CD8-positive, alpha-beta memory T cell (primary cell): ENCODE measurements at regions of chr22 and their contacts with region 1.

Region 1: GRCh38 chr22:40436505-40437451 is 66.4 kb downstream of the SGSM3 start:
- DNase-seq: peak in 2 of 5 donors; percentile 50 to 66
- H3K4me3 ChIP-seq: no peak overlapping the region
- H3K4me3 Mint-ChIP-seq: peak overlapping the region in 4 of 7 donors; percentile 20 to 83 (median 36)
- H3K27ac ChIP-seq: peak overlapping the region; percentile 18
- H3K27ac Mint-ChIP-seq: peak overlapping the region; percentile 37 to 92 (median 79)
- H3K4me1 ChIP-seq: peaks cover 35% of the 10 kb centered on the region
- H3K4me1 Mint-ChIP-seq: peaks cover 39 to 64% (median 45%) of the 10 kb centered on the region in 3 donors
- H3K27me3 ChIP-seq: no peaks in the 10 kb centered on the region
- H3K27me3 Mint-ChIP-seq: no peaks in the 10 kb centered on the region

Region 2: DNA sequence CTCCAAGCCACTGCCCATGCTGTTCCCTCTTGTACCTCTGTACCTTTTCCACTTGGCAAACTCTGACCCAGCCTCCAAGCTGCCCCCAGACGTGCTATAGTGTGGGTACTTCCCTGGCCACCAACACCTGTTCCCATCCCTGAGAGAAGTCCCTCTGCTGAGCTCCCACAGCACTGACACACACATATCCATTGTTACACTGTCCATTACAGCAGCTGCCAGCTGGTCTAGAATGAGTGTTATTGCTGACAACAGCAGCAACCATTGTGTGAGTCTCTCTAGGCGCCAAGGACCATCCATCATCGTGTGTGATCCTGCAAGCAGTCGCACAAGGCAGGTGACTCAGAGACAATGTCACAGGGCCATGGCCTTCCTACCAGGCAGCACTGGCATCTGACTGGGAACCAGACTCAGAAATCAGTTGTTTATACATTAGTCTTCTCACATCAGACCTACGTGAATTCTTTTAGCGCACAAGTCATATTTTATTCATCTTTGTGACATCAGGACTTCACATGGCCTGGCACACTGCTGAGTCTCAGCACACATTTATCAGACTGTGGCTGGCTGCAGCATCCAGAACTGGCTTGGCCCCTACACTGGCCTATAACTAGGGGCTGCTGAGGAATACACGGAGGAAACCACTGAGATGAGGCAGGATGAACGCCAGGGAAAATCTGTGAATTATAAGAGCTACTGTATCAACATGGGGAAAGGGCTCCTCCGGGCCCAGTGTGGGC is 10.0 kb before region 1 on chr22:
- CTCF ChIA-PET with region 1: interaction called, 11 read pairs
- POLR2A ChIA-PET with region 1: interaction called, 7 read pairs
- DNase-seq: no peak
- H3K4me3 ChIP-seq: no peak overlapping the region
- H3K4me3 Mint-ChIP-seq: no peak overlapping the region
- H3K27ac ChIP-seq: peak overlapping the region; percentile 9
- H3K27ac Mint-ChIP-seq: peak overlapping the region in 6 of 8 donors; percentile 10 to 85 (median 42)
- H3K4me1 ChIP-seq: no peaks in the 10 kb centered on the region
- H3K4me1 Mint-ChIP-seq: peaks cover 9 to 23% (median 20%) of the 10 kb centered on the region in 3 donors
- H3K27me3 ChIP-seq: no peaks in the 10 kb centered on the region
- H3K27me3 Mint-ChIP-seq: peaks cover 0 to 4% of the 10 kb centered on the region in 2 donors

Region 3: GRCh38 chr22:40449676-40450035 is 12.9 kb after region 1 on chr22:
- CTCF ChIA-PET with region 1: interaction called, 17 read pairs
- POLR2A ChIA-PET with region 1: no interaction called
- DNase-seq: no peak
- H3K4me3 ChIP-seq: no peak overlapping the region
- H3K4me3 Mint-ChIP-seq: peak overlapping the region in 2 of 7 donors; percentile 10 to 41
- H3K27ac ChIP-seq: no peak overlapping the region
- H3K27ac Mint-ChIP-seq: peak overlapping the region in 6 of 8 donors; percentile 24 to 77 (median 62)
- H3K4me1 ChIP-seq: peaks cover 56% of the 10 kb centered on the region
- H3K4me1 Mint-ChIP-seq: peaks cover 65 to 90% (median 87%) of the 10 kb centered on the region in 3 donors
- H3K27me3 ChIP-seq: no peaks in the 10 kb centered on the region
- H3K27me3 Mint-ChIP-seq: no peaks in the 10 kb centered on the region

Region 4: DNA sequence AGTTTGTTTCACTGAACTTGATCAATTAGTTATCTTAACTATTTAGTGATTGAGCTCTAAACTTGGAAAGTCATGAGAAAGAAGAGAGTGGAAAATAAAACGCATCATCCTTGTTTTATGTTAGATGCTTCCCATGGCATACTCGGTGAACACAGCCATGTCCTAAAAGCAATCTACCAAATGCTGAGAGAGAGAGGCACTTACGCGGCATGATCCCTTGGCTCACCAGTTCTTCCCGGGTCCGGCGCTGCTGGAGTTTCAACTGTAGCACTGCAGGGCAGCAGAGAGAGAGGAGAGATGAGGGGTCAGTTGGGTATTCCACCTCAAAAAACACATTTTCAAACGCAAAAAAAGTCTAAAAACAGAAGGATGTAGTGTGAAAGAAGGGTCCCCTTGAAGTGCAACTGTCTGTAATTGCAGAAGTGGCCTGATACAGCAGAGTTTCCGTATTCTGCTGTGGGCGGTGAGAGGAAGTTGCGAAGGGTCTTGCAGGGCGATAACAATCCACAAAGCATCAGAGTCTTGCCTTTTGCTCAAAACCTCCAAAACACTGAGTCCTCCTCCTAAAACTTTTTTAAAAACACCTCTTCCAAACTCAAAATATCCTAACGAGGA is 26.3 kb after region 1 on chr22:
- CTCF ChIA-PET with region 1: interaction called, 12 read pairs
- POLR2A ChIA-PET with region 1: no interaction called
- DNase-seq: peak; percentile 2 to 66 (median 29)
- H3K4me3 ChIP-seq: peak overlapping the region; percentile 83
- H3K4me3 Mint-ChIP-seq: peak overlapping the region; percentile 88 to 99 (median 97)
- H3K27ac ChIP-seq: peak overlapping the region; percentile 70
- H3K27ac Mint-ChIP-seq: peak overlapping the region; percentile 78 to 99 (median 94)
- H3K4me1 ChIP-seq: peaks cover 53% of the 10 kb centered on the region
- H3K4me1 Mint-ChIP-seq: peaks cover 58 to 64% (median 61%) of the 10 kb centered on the region in 3 donors
- H3K27me3 ChIP-seq: no peaks in the 10 kb centered on the region
- H3K27me3 Mint-ChIP-seq: no peaks in the 10 kb centered on the region

Region 5: DNA sequence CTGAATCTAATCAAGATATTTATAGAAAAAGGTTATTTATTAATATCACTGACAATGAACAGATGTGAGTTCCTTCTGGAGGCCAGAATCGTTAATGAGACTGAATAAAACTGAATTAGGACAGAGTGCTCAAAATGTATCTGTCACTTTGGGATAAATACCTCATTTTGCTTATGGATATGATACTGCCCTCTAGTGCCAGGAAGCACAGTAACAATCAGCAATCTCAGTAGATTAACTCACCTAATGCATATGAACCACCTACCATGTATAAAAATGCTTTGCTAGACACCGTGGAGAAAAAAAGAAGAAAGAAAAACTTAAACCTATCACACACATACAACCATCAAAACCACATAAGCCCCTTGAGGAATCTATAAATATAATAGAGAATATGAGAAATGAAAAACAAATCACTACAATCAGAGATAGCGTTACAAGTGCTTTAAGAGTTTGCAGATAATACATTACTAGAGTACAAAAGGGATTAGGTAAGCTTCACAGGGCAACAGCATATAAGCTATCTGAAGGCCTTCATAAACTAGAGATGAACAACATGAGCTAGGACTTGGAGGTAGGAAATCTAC is 51.0 kb after region 1 on chr22:
- CTCF ChIA-PET with region 1: interaction called, 42 read pairs
- POLR2A ChIA-PET with region 1: interaction called, 3 read pairs
- DNase-seq: peak in 2 of 5 donors; percentile 13 to 43
- H3K4me3 ChIP-seq: no peak overlapping the region
- H3K4me3 Mint-ChIP-seq: no peak overlapping the region
- H3K27ac ChIP-seq: no peak overlapping the region
- H3K27ac Mint-ChIP-seq: peak overlapping the region in 2 of 8 donors; percentile 1 to 90
- H3K4me1 ChIP-seq: peaks cover 29% of the 10 kb centered on the region
- H3K4me1 Mint-ChIP-seq: peaks cover 19 to 30% (median 25%) of the 10 kb centered on the region in 3 donors
- H3K27me3 ChIP-seq: no peaks in the 10 kb centered on the region
- H3K27me3 Mint-ChIP-seq: no peaks in the 10 kb centered on the region

Region 6: GRCh38 chr22:40645579-40646197 is 208.9 kb after region 1 on chr22:
- CTCF ChIA-PET with region 1: interaction called, 47 read pairs
- POLR2A ChIA-PET with region 1: no interaction called
- DNase-seq: no peak
- H3K4me3 ChIP-seq: no peak overlapping the region
- H3K4me3 Mint-ChIP-seq: peak overlapping the region in 2 of 7 donors; percentile 8 to 9
- H3K27ac ChIP-seq: no peak overlapping the region
- H3K27ac Mint-ChIP-seq: no peak overlapping the region
- H3K4me1 ChIP-seq: no peaks in the 10 kb centered on the region
- H3K4me1 Mint-ChIP-seq: peaks cover 4 to 10% (median 9%) of the 10 kb centered on the region in 3 donors
- H3K27me3 ChIP-seq: no peaks in the 10 kb centered on the region
- H3K27me3 Mint-ChIP-seq: peaks cover 0 to 3% of the 10 kb centered on the region in 2 donors

Region 7: GRCh38 chr22:40898850-40899357 is 462.1 kb after region 1 on chr22:
- CTCF ChIA-PET with region 1: interaction called, 12 read pairs
- POLR2A ChIA-PET with region 1: no interaction called
- DNase-seq: peak in 2 of 5 donors; percentile 15 to 18
- H3K4me3 ChIP-seq: no peak overlapping the region
- H3K4me3 Mint-ChIP-seq: no peak overlapping the region
- H3K27ac ChIP-seq: no peak overlapping the region
- H3K27ac Mint-ChIP-seq: peak overlapping the region in 3 of 8 donors; percentile 29 to 58 (median 51)
- H3K4me1 ChIP-seq: peaks cover 7% of the 10 kb centered on the region
- H3K4me1 Mint-ChIP-seq: peaks cover 4 to 6% (median 6%) of the 10 kb centered on the region in 3 donors
- H3K27me3 ChIP-seq: no peaks in the 10 kb centered on the region
- H3K27me3 Mint-ChIP-seq: no peaks in the 10 kb centered on the region

Region 8: DNA sequence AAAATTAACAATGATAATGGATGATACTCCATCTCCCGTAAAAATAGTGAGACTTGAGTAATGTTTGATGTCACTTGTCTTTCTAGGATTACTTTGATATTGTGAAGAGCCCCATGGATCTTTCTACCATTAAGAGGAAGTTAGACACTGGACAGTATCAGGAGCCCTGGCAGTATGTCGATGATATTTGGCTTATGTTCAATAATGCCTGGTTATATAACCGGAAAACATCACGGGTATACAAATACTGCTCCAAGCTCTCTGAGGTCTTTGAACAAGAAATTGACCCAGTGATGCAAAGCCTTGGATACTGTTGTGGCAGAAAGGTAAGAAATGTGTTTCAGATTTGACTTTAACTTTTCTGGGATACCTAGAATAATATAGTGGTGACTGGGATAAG is 720.3 kb after region 1 on chr22:
- CTCF ChIA-PET with region 1: no interaction called
- POLR2A ChIA-PET with region 1: no interaction called
- DNase-seq: no peak
- H3K4me3 ChIP-seq: no peak overlapping the region
- H3K4me3 Mint-ChIP-seq: no peak overlapping the region
- H3K27ac ChIP-seq: no peak overlapping the region
- H3K27ac Mint-ChIP-seq: peak overlapping the region in 1 of 8 donors; percentile 21
- H3K4me1 ChIP-seq: no peaks in the 10 kb centered on the region
- H3K4me1 Mint-ChIP-seq: no peaks in the 10 kb centered on the region
- H3K27me3 ChIP-seq: no peaks in the 10 kb centered on the region
- H3K27me3 Mint-ChIP-seq: no peaks in the 10 kb centered on the region